Activated naive CD4-positive, alpha-beta T cell treated with anti-CD3 and anti-CD28 coated beads for 36 hours (primary cell): ENCODE measurements at regions of chr12 and their contacts with region 1.

Region 1: GRCh38 chr12:54689984-54690383 is 41.8 kb upstream of the DCD start:
- DNase-seq: no peak
- H3K4me3 Mint-ChIP-seq: no peak overlapping the region
- H3K27ac Mint-ChIP-seq: no peak overlapping the region
- H3K4me1 Mint-ChIP-seq: no peaks in the 10 kb centered on the region
- H3K27me3 Mint-ChIP-seq: peaks cover 44% of the 10 kb centered on the region

Region 2: DNA sequence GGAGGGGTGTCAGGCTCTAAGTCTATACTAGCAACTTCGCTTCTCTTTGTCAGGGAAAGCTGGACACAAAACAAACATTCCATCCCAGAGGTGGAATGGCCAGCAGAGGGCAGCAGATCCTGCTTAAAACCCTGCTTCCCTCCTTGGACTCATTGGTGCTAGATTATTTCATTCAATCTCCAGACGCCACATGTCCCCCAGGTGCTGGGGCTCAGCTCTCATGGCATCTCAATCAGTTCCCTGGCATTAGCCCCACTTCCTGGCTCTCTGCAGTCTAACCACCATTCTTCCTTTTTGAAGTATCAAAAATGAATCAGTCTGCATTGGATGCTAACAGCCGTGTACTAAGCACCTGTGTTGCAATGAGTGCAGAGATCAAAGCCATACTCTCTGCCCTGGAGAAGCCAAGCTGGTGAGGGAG is 93.4 kb before region 1 on chr12:
- CTCF ChIA-PET with region 1: interaction called, 4 read pairs
- intact Hi-C with region 1: loop called (anchors 1 kb)
- DNase-seq: peak; percentile 77
- H3K4me3 Mint-ChIP-seq: no peak overlapping the region
- H3K27ac Mint-ChIP-seq: no peak overlapping the region
- H3K4me1 Mint-ChIP-seq: peaks cover 5% of the 10 kb centered on the region
- H3K27me3 Mint-ChIP-seq: peaks cover 2% of the 10 kb centered on the region

Region 3: DNA sequence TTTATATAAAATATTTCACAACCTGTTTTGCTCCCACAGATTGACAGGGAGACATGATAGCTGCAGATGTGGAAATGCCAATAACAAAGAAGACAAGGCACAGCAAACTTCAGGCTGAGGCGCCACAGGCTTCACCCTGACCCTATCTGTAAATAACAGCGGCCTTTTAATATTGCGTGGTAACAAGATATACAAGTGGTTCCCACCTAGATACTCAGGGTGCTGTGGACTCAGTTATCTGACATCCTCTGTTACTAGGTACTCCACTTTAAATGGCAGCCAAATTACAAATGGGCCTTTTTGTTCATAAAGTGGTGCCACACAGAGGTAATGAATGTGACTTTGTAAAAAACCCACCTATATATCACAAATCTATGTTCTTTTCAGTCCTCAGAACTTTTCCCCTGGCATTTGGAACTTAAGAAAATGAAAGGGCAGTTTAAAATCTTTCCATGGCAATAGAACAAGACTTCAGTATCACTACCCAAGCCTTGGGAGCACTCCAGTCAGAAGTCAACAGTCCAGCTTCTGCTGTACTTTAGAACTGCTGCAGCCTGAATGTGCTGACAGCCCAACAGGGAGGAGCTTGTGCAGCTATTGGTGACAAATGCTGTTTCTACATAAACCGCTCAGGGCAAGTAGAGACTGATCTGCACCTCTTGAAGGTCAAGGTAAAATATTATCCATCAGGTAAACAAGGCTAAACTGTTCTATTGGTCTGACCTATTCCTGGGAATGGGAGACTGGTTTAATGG is 44.4 kb after region 1 on chr12:
- CTCF ChIA-PET with region 1: no interaction called
- intact Hi-C with region 1: no loop called
- DNase-seq: no peak
- H3K4me3 Mint-ChIP-seq: no peak overlapping the region
- H3K27ac Mint-ChIP-seq: no peak overlapping the region
- H3K4me1 Mint-ChIP-seq: peaks cover 40% of the 10 kb centered on the region
- H3K27me3 Mint-ChIP-seq: no peaks in the 10 kb centered on the region